Motor neuron (in vitro differentiated cells): ENCODE measurements at regions of chr11 and their contacts with region 1.

Region 1: DNA sequence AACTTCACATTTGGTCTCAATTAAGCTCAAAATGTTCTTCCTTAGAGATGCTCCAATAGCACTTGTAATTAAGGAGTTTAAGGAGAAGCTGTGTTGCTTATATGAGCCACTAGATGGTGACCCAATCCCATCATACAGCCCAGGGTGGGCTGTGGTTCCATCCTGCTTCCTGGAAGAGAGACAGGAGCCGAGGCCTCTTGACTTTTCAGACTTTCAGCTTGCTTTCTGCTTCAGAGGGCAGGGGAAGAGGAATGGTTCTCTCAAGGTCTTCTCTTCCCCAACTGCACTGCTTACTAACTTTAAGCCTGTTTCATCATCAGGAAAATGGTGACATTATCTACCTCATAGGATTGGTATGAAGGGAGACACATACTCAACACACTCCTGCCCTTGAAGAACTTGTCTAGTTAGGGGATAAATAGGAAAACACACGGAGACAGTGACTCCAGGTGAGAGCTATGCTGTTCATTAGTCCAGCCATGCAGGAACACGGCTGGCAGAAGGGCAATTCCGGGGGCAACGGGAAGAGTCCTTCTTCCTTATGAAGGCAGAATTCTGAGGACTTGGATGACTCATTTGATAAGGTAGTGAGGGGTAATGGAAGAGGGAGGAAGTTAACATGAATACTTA is 20.1 kb downstream of the TMEM218 start:
- ATAC-seq: peak; percentile 93 to 97 (median 94)
- H3K4me3 ChIP-seq: no peak overlapping the region
- H3K27ac ChIP-seq: no peak overlapping the region
- H3K4me1 ChIP-seq: peaks cover 12 to 15% of the 10 kb centered on the region in 2 donors

Region 2: GRCh38 chr11:125345421-125346178 is 254.2 kb after region 1 on chr11:
- in situ Hi-C with region 1: loop called in 3 of 9 experiments (anchors 10 to 25 kb)
- ATAC-seq: peak; percentile 66 to 86 (median 70)
- H3K4me3 ChIP-seq: no peak overlapping the region
- H3K27ac ChIP-seq: peak overlapping the region in 1 of 2 donors; percentile 54
- H3K4me1 ChIP-seq: peaks cover 85 to 91% of the 10 kb centered on the region in 2 donors

Region 3: DNA sequence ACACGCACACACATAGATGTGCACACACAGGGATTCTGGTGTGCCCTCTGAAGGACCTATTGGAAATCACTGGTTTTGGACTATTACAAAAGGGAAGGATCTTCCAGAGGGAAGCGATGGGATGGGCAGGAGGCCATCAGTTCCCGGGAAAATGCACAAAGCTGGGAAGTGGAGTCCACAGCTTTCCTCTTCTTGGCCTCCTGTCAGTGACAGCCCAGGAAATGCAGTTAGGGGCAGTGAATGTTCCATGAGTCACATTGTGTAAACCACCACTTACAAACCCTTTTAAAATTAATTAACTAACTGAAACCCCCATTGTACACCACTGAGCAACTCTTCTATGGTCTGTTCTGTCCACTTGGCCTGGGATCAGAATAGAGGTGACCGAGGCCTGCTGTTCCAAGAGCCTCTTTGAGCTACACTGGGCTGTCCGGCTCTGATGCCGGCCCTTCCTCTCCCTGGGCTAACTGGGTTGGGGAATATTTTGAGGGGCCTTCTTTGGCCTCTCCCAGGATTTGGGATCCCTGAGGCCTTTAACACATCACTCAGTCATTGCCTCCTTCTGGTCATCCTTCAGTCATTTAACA is 267.0 kb after region 1 on chr11:
- in situ Hi-C with region 1: loop called in 1 of 9 experiments (anchors 10 kb)
- ATAC-seq: no peak
- H3K4me3 ChIP-seq: no peak overlapping the region
- H3K27ac ChIP-seq: no peak overlapping the region
- H3K4me1 ChIP-seq: peaks cover 10 to 19% of the 10 kb centered on the region in 2 donors